ENCODE measurements at regions of chr5 and their contacts with region 1.

Region 1: DNA sequence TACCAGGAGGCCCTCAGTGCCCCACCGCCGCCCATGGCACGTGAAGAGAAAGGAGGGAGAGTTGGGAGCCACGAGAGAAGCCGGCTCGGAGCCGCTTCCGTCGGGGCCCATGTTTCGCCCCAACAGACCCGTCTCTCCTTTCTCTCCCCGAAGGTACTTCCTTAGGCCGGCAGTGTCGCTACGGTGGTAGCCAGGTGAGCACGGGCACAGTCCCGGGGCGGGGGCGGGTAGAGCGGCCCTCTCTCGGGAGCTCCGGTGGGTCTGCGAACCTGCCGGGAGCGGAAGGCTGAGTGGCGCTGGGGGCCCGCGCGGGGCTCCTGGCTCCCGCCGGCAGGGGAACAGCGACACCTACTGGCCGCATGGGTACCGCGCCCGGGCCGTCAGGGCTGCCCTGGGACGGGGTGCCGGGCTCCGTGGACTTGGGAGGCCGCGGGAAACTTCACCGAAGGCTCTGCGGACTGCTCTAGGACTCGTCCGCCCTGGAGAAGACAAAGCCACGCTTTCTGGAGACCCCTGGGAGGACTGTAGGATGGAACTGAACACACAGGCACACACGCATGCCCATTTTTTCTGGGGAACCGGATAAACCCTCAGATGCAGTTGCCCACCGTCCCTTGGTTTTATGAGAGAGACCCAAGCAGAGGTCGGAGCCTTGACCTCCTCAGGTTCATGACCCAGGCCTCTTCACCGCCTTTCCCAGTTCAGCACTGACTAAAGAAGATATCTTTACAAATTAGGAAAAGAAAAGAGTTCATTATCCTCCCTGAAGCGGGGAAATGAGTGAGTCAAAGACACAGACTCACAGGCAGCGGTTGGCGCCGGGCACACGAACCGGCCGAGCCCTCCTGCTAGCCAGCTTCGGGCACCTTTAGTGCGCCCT is 202.5 kb downstream of the MEF2C start:
- DNase-seq: no peak
- ATAC-seq: peak; percentile 93
- H3K4me3 ChIP-seq: peak overlapping the region; percentile 50 to 62
- H3K27ac ChIP-seq: peak overlapping the region; percentile 69
- H3K4me1 ChIP-seq: peaks cover 19% of the 10 kb centered on the region
- H3K27me3 ChIP-seq: no peaks in the 10 kb centered on the region
- CTCF ChIP-seq: peak; percentile 97

Region 2: GRCh38 chr5:88140856-88141752 is 539.4 kb before region 1 on chr5:
- CTCF ChIA-PET with region 1: no interaction called
- POLR2A ChIA-PET with region 1: interaction called, 5 read pairs
- in situ Hi-C with region 1: no loop called
- intact Hi-C with region 1: loop called (anchors 1 kb)
- DNase-seq: peak; percentile 82
- ATAC-seq: peak; percentile 95
- H3K4me3 ChIP-seq: peak overlapping the region; percentile 67 to 89
- H3K27ac ChIP-seq: peak overlapping the region; percentile 53
- H3K4me1 ChIP-seq: peaks cover 19% of the 10 kb centered on the region
- H3K27me3 ChIP-seq: peaks cover 19% of the 10 kb centered on the region
- CTCF ChIP-seq: peak; percentile 86

Region 3: DNA sequence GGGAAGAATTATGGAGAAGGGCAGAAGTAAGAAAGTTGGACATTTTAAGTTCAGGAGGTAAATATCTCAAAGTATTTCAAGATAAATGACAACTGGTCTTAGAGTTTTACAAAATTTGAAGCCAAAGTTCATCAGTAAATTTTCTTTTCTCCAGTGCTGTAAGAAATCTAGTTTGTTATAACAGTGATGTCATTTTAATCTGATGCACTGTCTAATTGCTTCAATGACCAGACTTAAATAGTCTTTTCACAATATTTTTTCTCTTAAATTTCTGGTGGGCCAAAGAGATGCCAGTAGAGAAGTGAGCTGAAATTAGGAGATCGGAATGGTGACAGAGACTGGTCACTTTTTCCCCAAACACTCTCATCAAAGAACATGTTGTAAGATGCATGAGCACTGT is 255.4 kb before region 1 on chr5:
- CTCF ChIA-PET with region 1: no interaction called
- POLR2A ChIA-PET with region 1: interaction called, 13 read pairs
- in situ Hi-C with region 1: no loop called
- intact Hi-C with region 1: no loop called
- DNase-seq: no peak
- ATAC-seq: no peak
- H3K4me3 ChIP-seq: no peak overlapping the region
- H3K27ac ChIP-seq: no peak overlapping the region
- H3K4me1 ChIP-seq: no peaks in the 10 kb centered on the region
- H3K27me3 ChIP-seq: no peaks in the 10 kb centered on the region
- CTCF ChIP-seq: no peak

Region 4: DNA sequence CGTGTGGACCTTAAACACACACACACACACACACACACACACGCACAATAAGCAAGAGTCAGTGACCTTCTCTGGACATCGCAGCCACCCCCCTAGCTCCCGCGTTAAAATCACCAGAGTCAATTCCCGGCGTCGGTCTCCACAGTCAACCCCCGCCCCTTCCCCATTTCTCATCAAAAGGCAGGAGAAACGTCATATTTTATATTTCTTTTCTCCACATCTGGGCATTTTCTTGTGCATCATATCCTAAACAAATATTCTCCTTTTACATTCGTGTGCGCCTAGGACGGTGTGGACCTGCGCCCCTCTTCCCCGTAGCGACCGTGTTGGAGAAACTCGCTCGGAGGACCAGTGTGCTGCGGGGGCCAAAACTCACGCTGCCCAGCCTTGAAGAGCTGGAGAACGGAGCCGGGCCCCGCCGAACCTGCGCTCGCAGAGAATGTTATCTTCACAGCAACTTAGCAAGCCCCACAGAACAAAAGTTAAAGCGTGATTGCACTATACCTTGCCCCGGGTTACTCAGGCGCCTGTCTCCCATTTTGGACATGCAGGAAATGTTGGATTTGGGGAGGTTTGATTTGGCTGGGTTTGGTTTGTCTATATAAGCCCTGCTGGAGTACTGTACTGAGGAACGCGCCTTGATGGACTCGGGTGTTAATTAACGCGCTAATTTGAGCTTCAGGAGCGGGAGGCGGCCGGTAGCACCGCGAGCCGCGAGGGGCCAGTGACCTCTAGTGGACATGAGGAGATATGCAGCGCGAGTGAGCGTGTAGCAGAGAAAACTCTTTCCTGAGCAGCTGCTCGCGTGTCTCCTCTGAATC is 10.1 kb after region 1 on chr5:
- CTCF ChIA-PET with region 1: interaction called, 12 read pairs
- POLR2A ChIA-PET with region 1: no interaction called
- in situ Hi-C with region 1: no loop called
- intact Hi-C with region 1: no loop called
- DNase-seq: no peak
- ATAC-seq: peak; percentile 92
- H3K4me3 ChIP-seq: peak overlapping the region; percentile 30 to 56
- H3K27ac ChIP-seq: no peak overlapping the region
- H3K4me1 ChIP-seq: peaks cover 10% of the 10 kb centered on the region; the same call in 1 of the 2 replicates
- H3K27me3 ChIP-seq: peaks cover 3% of the 10 kb centered on the region
- CTCF ChIP-seq: peak; percentile 99